ENCODE measurements at regions of chr13 and their contacts with region 1.

Region 1: DNA sequence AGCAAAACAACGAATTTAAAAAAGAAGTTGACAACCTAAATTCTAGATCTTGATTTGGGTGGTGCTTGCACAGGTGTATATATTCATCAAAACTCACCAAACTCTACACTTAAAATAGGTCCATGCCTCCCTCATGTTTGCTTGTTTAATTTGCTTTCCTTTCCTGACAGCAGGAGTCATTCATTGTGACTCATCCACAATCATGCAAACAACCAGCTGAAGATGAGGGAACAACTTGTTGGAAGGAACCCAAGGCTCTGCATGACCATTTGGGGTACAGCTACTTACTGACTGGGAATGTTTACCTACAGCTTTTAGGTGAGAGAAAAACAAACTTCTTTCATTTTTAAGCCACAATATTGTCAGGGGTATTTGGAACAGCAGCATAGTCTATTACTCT is 96.6 kb downstream of the RXFP2 start:
- DNase-seq: no peak
- ATAC-seq: no peak
- H3K4me3 ChIP-seq: no peak overlapping the region
- H3K27ac ChIP-seq: no peak overlapping the region
- H3K4me1 ChIP-seq: no peaks in the 10 kb centered on the region
- H3K27me3 ChIP-seq: no peaks in the 10 kb centered on the region
- CTCF ChIP-seq: no peak

Region 2: DNA sequence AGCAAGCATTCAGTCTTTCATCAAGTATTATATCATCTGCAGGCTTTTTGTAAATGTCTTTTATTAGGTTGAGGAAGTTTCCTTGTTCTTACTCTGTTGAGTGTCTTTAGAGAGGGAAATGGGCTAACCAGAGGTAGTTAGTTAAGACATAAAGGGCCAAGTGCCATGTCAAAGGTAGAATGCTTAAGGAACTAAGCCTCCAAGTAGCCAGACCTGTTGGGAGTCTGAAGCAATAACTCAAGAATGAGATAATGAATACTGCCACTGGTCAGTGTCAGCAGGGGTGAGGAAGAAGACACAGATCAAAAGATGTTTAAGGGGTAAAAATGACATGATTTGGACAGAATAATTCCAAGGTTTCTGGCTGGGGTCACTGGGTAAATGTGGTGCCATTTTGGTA is 103.7 kb after region 1 on chr13:
- intact Hi-C with region 1: no loop called
- DNase-seq: no peak
- ATAC-seq: no peak
- H3K4me3 ChIP-seq: no peak overlapping the region
- H3K27ac ChIP-seq: no peak overlapping the region
- H3K4me1 ChIP-seq: peaks cover 0 to 31% (median 6%) of the 10 kb centered on the region in 9 donors
- H3K27me3 ChIP-seq: no peaks in the 10 kb centered on the region
- CTCF ChIP-seq: no peak

Region 3: GRCh38 chr13:32234932-32235331 is 399.0 kb after region 1 on chr13:
- intact Hi-C with region 1: loop called in 1 of 10 experiments (anchors 5 kb)
- DNase-seq: no peak
- ATAC-seq: peak in 3 of 8 donors; percentile 8 to 19 (median 15)
- H3K4me3 ChIP-seq: no peak overlapping the region
- H3K27ac ChIP-seq: no peak overlapping the region
- H3K4me1 ChIP-seq: peaks cover 0 to 22% (median 10%) of the 10 kb centered on the region in 9 donors
- H3K27me3 ChIP-seq: no peaks in the 10 kb centered on the region
- CTCF ChIP-seq: no peak

Measured in heart right ventricle (tissue), 16 donors.